ENCODE measurements at regions of chr11 and their contacts with region 1.

Region 1: DNA sequence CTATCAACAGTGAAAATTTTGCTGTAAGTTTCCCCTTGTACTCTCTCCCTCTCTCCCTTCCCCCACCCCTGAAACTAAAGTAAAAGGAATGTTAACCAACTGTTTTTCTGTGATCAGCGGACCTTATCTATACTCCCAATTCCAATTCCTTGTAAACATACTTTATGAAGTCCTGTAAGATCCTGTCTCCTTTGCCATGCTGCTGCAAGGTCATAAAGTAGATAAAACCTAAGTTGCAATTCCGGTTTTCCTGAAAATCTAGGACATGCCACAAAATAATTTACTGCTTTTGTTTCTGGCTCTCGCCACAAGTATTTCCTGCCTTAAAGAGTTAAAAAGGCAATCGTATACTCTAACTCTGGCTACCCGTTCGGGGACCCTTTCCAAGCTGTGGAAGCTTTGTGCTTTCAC is 1469.0 kb downstream of the LRRC4C start:
- DNase-seq: no peak
- ATAC-seq: no peak
- H3K4me3 Mint-ChIP-seq: no peak overlapping the region
- H3K27ac Mint-ChIP-seq: no peak overlapping the region
- H3K4me1 Mint-ChIP-seq: no peaks in the 10 kb centered on the region
- H3K27me3 Mint-ChIP-seq: no peaks in the 10 kb centered on the region

Region 2: DNA sequence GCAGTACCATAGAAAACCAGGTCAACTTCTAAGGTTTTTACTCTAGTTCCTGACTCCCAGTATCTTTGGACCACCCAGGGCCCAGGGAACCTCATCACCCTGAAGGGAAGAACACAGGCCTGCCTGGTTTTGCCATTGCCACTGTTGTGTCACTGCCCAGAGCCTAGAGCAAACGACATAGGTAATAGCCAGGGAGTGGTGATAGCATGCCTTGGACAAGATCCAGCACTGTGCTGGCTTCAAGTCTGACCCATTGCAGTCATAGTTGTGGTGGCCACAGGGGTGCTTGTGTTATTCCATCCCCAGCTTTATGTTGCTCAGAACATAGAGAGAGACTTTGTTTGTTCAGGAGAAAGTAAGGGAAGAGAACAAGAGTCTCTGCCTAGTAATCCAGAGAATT is 841.2 kb before region 1 on chr11:
- CTCF ChIA-PET with region 1: no interaction called
- POLR2A ChIA-PET with region 1: no interaction called
- intact Hi-C with region 1: loop called in 1 of 2 experiments (anchors 10 kb)
- DNase-seq: no peak
- ATAC-seq: no peak
- H3K4me3 Mint-ChIP-seq: no peak overlapping the region
- H3K27ac Mint-ChIP-seq: no peak overlapping the region
- H3K4me1 Mint-ChIP-seq: no peaks in the 10 kb centered on the region
- H3K27me3 Mint-ChIP-seq: no peaks in the 10 kb centered on the region

Region 3: GRCh38 chr11:40045312-40045711 is 54.9 kb after region 1 on chr11:
- CTCF ChIA-PET with region 1: no interaction called
- POLR2A ChIA-PET with region 1: no interaction called
- intact Hi-C with region 1: no loop called
- DNase-seq: no peak
- ATAC-seq: no peak
- H3K4me3 Mint-ChIP-seq: no peak overlapping the region
- H3K27ac Mint-ChIP-seq: no peak overlapping the region
- H3K4me1 Mint-ChIP-seq: no peaks in the 10 kb centered on the region
- H3K27me3 Mint-ChIP-seq: no peaks in the 10 kb centered on the region

Region 4: GRCh38 chr11:40328890-40329614 is 338.6 kb after region 1 on chr11:
- CTCF ChIA-PET with region 1: no interaction called
- POLR2A ChIA-PET with region 1: no interaction called
- intact Hi-C with region 1: no loop called
- DNase-seq: no peak
- ATAC-seq: no peak
- H3K4me3 Mint-ChIP-seq: no peak overlapping the region
- H3K27ac Mint-ChIP-seq: no peak overlapping the region
- H3K4me1 Mint-ChIP-seq: no peaks in the 10 kb centered on the region
- H3K27me3 Mint-ChIP-seq: no peaks in the 10 kb centered on the region